ENCODE measurements at regions of chr4 and their contacts with region 1.

Region 1: DNA sequence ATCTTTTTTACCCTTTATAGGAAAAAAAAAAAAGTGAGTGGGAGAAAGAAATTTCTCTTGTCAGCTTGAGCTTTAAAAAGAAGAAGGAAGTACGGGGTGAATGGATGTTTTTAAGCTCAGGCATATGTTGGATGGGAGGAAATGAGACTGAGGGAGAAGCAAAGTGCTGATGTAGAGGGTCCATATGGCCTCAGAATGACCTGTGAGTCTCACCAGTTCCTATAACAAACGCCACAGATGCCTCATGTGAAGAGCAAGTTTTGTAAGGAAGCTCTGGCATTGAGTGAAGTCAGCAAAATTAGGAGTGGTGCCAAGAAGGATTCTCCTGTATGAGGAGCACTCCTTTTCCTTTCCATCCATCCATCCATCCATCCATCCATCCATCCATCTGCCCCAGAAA is 214.6 kb downstream of the PTTG2 start:
- DNase-seq: no peak
- H3K4me3 ChIP-seq: no peak overlapping the region
- H3K27ac ChIP-seq: peak overlapping the region; percentile 51; the same call in 1 of the 2 replicates
- H3K4me1 ChIP-seq: peaks cover 21% of the 10 kb centered on the region
- H3K27me3 ChIP-seq: no peaks in the 10 kb centered on the region
- CTCF ChIP-seq: no peak

Region 2: GRCh38 chr4:38723726-38724474 is 549.1 kb after region 1 on chr4:
- CTCF ChIA-PET with region 1: interaction called, 5 read pairs
- POLR2A ChIA-PET with region 1: no interaction called
- intact Hi-C with region 1: loop called (anchors 1 kb)
- DNase-seq: peak; percentile 74 to 97
- H3K4me3 ChIP-seq: peak overlapping the region; percentile 15; the same call in 1 of the 2 replicates
- H3K27ac ChIP-seq: peak overlapping the region; percentile 97
- H3K4me1 ChIP-seq: peaks cover 54% of the 10 kb centered on the region
- H3K27me3 ChIP-seq: no peaks in the 10 kb centered on the region
- CTCF ChIP-seq: no peak

Measured in PC-9 (cell line).